Caco-2 (cell line): ENCODE measurements at regions of chr2 and their contacts with region 1.

Region 1: DNA sequence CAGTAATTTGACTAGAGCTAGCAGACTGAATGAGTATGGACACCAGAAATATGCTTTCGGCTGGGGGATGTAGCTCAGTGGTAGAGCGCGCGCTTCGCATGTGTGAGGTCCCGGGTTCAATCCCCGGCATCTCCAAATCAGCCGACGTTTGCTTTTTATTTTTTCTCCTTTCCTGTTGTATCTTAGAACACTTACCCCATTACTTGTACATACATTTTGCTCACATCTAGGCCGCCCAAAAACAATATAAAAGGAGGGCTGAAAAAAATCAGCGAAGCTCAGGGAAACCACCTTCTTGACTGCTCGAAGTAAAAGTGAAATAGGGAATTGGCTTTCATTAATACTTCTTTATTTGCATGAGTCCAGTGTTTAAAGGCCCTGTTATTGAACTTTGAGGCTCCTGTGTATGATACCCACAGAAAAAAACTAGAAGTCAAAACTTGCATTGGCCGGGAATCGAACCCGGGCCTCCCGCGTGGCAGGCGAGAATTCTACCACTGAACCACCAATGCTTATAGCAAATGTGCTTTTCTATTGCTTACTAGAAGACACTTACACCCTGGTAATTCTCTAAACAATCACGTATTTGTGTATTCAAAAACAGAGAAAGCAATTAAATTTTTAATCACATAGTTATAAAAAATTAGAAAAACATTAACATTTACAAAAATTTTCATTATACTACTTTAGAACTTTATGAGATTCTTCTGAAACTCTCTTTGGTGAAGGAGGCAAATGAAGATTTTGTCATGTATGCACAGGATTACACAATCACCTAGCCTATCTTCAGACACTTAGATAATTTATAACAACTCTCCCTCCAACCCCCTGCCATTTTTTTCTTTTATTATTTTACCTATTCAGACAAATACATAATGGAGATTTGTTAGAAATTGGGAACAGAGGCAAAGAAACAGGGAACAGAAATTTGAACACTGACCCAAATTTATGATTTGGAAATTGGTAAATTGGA is 35.2 kb upstream of the GPD2 start:
- DNase-seq: peak; percentile 63 to 82
- H3K4me3 ChIP-seq: peak overlapping the region; percentile 74
- H3K4me3 Mint-ChIP-seq: peak overlapping the region; percentile 88
- H3K27ac Mint-ChIP-seq: peak overlapping the region; percentile 97
- H3K4me1 ChIP-seq: peaks cover 16% of the 10 kb centered on the region; the same call in 1 of the 2 replicates
- H3K4me1 Mint-ChIP-seq: peaks cover 48% of the 10 kb centered on the region
- H3K27me3 ChIP-seq: no peaks in the 10 kb centered on the region
- H3K27me3 Mint-ChIP-seq: peaks cover 8% of the 10 kb centered on the region
- CTCF ChIP-seq: no peak

Region 2: GRCh38 chr2:156319811-156320485 is 81.0 kb before region 1 on chr2:
- CTCF ChIA-PET with region 1: no interaction called
- POLR2A ChIA-PET with region 1: no interaction called
- intact Hi-C with region 1: no loop called
- DNase-seq: no peak
- H3K4me3 ChIP-seq: no peak overlapping the region
- H3K4me3 Mint-ChIP-seq: peak overlapping the region; percentile 0
- H3K27ac Mint-ChIP-seq: no peak overlapping the region
- H3K4me1 ChIP-seq: no peaks in the 10 kb centered on the region
- H3K4me1 Mint-ChIP-seq: no peaks in the 10 kb centered on the region
- H3K27me3 ChIP-seq: no peaks in the 10 kb centered on the region
- H3K27me3 Mint-ChIP-seq: peaks cover 3% of the 10 kb centered on the region
- CTCF ChIP-seq: no peak

Region 3: GRCh38 chr2:156341452-156342253 is 59.3 kb before region 1 on chr2:
- CTCF ChIA-PET with region 1: no interaction called
- POLR2A ChIA-PET with region 1: interaction called, 4 read pairs
- intact Hi-C with region 1: loop called (anchors 1 kb)
- DNase-seq: peak; percentile 83 to 92
- H3K4me3 ChIP-seq: peak overlapping the region; percentile 94
- H3K4me3 Mint-ChIP-seq: peak overlapping the region; percentile 87
- H3K27ac Mint-ChIP-seq: peak overlapping the region; percentile 88
- H3K4me1 ChIP-seq: peaks cover 9% of the 10 kb centered on the region; the same call in 1 of the 2 replicates
- H3K4me1 Mint-ChIP-seq: no peaks in the 10 kb centered on the region
- H3K27me3 ChIP-seq: no peaks in the 10 kb centered on the region
- H3K27me3 Mint-ChIP-seq: no peaks in the 10 kb centered on the region
- CTCF ChIP-seq: no peak

Region 4: GRCh38 chr2:156435715-156436496 is 34.9 kb after region 1 on chr2 and contains the start of gene GPD2:
- CTCF ChIA-PET with region 1: interaction called, 3 read pairs
- POLR2A ChIA-PET with region 1: interaction called, 3 read pairs
- intact Hi-C with region 1: loop called (anchors 1 kb)
- DNase-seq: peak; percentile 93 to 94
- H3K4me3 ChIP-seq: peak within 1 kb of the TSS; percentile 48
- H3K4me3 Mint-ChIP-seq: peak within 1 kb of the TSS; percentile 90
- H3K27ac Mint-ChIP-seq: peak within 1 kb of the TSS; percentile 83
- H3K4me1 ChIP-seq: peaks cover 27% of the 10 kb centered on the region
- H3K4me1 Mint-ChIP-seq: peaks cover 17% of the 10 kb centered on the region
- H3K27me3 ChIP-seq: no peaks in the 10 kb centered on the region
- H3K27me3 Mint-ChIP-seq: no peaks in the 10 kb centered on the region
- CTCF ChIP-seq: peak in 1 of 2 experiments; percentile 36
- total RNA-seq, gene GPD2: 56.8 and 58.3 TPM in 2 replicates

Region 5: DNA sequence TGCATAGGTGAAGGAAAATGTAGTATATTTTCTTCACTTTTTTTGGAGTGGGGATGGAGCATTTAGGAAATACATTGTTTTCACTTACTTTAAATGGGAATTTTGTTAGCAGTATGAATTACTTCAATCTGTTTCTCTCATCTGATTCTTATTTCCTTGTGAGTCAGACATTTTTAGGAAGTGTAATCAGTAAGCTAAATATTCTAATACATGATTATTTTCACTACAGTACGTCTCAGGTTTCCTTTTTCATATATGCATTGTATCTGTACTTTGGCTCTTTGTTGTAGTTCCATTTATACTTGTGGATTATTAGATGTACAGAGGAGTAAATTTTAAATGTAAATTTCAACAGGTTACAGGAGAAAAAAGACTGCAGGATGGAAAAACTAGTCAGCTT is 63.1 kb after region 1 on chr2:
- CTCF ChIA-PET with region 1: no interaction called
- POLR2A ChIA-PET with region 1: no interaction called
- intact Hi-C with region 1: loop called (anchors 2 kb)
- DNase-seq: no peak
- H3K4me3 ChIP-seq: no peak overlapping the region
- H3K4me3 Mint-ChIP-seq: no peak overlapping the region
- H3K27ac Mint-ChIP-seq: no peak overlapping the region
- H3K4me1 ChIP-seq: peaks cover 64% of the 10 kb centered on the region
- H3K4me1 Mint-ChIP-seq: peaks cover 57% of the 10 kb centered on the region
- H3K27me3 ChIP-seq: no peaks in the 10 kb centered on the region
- H3K27me3 Mint-ChIP-seq: no peaks in the 10 kb centered on the region
- CTCF ChIP-seq: no peak